Ovary (tissue), 10 donors: ENCODE measurements at regions of chr4 and their contacts with region 1.

Region 1: GRCh38 chr4:149630079-149630478 is 185.6 kb downstream of the IQCM start:
- DNase-seq: no peak
- H3K4me3 ChIP-seq: no peak overlapping the region
- H3K27ac ChIP-seq: no peak overlapping the region
- H3K4me1 ChIP-seq: no peaks in the 10 kb centered on the region
- H3K27me3 ChIP-seq: no peaks in the 10 kb centered on the region
- CTCF ChIP-seq: no peak
- EP300 ChIP-seq: no peak
- POLR2A ChIP-seq: no peak

Region 2: GRCh38 chr4:149676076-149676475 is 46.0 kb after region 1 on chr4:
- intact Hi-C with region 1: loop called in 1 of 4 experiments (anchors 1 kb)
- DNase-seq: no peak
- H3K4me3 ChIP-seq: no peak overlapping the region
- H3K27ac ChIP-seq: no peak overlapping the region
- H3K4me1 ChIP-seq: no peaks in the 10 kb centered on the region
- H3K27me3 ChIP-seq: no peaks in the 10 kb centered on the region
- CTCF ChIP-seq: no peak
- EP300 ChIP-seq: no peak
- POLR2A ChIP-seq: no peak

Region 3: DNA sequence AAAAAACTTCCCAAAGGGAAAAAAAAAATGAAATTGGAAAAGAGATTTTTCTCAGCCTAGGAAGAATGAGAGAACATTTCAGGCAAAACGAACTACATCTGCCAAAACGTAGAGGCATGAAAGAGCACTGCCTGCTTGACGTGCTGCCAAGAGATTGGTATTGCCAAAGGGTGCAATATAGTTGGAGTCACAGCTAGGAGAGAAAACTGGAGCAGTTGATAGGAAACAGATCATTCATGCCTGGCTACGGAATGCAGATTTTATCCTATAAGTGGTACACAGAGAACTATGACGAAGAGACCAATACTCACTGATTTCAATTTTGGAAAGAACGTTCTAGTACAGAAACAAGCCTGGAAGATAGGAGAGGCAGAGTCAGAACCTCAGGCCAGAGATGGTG is 254.0 kb after region 1 on chr4:
- intact Hi-C with region 1: no loop called
- DNase-seq: no peak
- H3K4me3 ChIP-seq: no peak overlapping the region
- H3K27ac ChIP-seq: no peak overlapping the region
- H3K4me1 ChIP-seq: no peaks in the 10 kb centered on the region
- H3K27me3 ChIP-seq: no peaks in the 10 kb centered on the region
- CTCF ChIP-seq: no peak
- EP300 ChIP-seq: no peak
- POLR2A ChIP-seq: no peak

Region 4: GRCh38 chr4:151584101-151584500 is 1954.0 kb after region 1 on chr4:
- intact Hi-C with region 1: no loop called
- DNase-seq: no peak
- H3K4me3 ChIP-seq: no peak overlapping the region
- H3K27ac ChIP-seq: no peak overlapping the region
- H3K4me1 ChIP-seq: no peaks in the 10 kb centered on the region
- H3K27me3 ChIP-seq: no peaks in the 10 kb centered on the region
- CTCF ChIP-seq: no peak
- EP300 ChIP-seq: no peak
- POLR2A ChIP-seq: no peak